GM10248 (cell line): ENCODE measurements at regions of chr11 and their contacts with region 1.

Region 1: DNA sequence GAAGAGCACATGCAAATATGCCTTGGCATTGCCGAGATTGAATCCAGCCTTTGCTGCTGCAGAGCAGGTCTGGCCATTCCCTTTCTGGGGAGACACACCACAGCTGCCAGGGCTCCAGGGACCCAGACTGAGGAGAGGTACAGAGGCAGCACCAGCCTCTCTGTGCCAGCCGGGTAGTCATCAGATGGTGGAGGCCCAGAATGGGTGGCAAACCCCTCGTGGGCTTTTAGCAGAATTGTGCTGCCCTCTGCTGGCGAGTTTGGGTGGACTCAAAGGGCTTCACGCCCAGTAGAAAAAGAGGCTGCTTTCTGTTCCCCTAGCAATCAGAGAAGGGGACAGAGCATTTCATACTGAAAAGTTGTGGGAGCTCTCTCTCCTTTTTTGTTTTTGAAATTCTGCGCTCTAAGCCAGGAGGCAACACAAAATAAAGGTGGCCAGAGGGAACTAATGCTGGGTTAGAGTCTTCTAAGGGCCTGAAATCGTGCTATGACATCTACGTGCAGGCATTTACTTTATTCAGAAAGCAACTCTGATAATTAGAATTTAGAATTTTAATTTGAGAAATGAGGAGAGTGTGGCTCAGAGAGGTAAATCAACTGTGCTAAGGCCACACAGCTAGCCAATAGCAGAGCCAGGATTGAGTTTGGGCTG is 158.8 kb upstream of the NAV2 start:
- DNase-seq: peak; percentile 75
- CTCF ChIP-seq: peak; percentile 78

Region 2: GRCh38 chr11:19076744-19077589 is 476.8 kb before region 1 on chr11:
- CTCF ChIA-PET with region 1: interaction called, 62 read pairs
- POLR2A ChIA-PET with region 1: no interaction called
- DNase-seq: peak; percentile 67
- CTCF ChIP-seq: peak; percentile 97

Region 3: GRCh38 chr11:19311308-19312030 is 242.3 kb before region 1 on chr11:
- CTCF ChIA-PET with region 1: interaction called, 14 read pairs
- POLR2A ChIA-PET with region 1: no interaction called
- DNase-seq: peak; percentile 68
- CTCF ChIP-seq: peak; percentile 88

Region 4: GRCh38 chr11:19508159-19508558 is 45.6 kb before region 1 on chr11:
- CTCF ChIA-PET with region 1: no interaction called
- POLR2A ChIA-PET with region 1: no interaction called
- DNase-seq: no peak
- CTCF ChIP-seq: no peak

Region 5: GRCh38 chr11:19536131-19536530 is 17.7 kb before region 1 on chr11:
- CTCF ChIA-PET with region 1: interaction called, 15 read pairs
- POLR2A ChIA-PET with region 1: no interaction called
- DNase-seq: no peak
- CTCF ChIP-seq: no peak

Region 6: DNA sequence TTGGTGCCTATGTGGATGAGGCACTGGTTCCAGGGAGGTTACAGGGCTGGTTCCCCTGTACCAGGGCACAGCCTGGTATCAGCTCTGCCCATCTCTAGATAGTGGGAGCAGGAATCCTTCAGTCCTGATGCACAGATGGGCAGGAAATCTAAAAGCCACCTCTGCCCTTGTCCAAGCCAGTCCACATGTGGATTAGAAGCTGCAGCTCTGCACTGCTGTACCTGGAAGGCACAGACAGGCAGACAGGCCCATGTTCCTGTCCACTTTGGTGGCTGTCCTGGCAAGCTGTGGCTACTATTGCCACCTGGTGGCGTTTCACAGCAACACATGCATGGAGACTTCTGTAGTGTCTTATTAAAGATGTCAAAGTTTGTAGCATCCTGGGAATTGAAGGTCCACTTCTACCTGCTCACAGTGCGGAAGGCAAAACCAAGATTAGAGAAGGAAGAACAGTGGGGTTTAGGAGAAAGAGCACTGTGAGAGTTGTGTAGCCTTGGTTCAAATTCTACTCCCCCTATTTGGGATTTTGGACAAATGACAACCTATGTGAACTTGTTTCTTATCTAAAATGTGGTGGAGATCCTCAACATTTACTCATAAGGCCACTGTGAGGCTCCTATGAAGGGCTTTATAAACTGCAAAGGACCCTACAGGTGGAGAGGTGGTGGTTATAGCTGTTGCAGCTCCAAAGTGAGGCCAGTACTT is 188.9 kb after region 1 on chr11:
- CTCF ChIA-PET with region 1: interaction called, 24 read pairs
- POLR2A ChIA-PET with region 1: no interaction called
- DNase-seq: peak; percentile 40
- CTCF ChIP-seq: peak; percentile 82